ENCODE measurements at regions of chr20 and their contacts with region 1.

Region 1: DNA sequence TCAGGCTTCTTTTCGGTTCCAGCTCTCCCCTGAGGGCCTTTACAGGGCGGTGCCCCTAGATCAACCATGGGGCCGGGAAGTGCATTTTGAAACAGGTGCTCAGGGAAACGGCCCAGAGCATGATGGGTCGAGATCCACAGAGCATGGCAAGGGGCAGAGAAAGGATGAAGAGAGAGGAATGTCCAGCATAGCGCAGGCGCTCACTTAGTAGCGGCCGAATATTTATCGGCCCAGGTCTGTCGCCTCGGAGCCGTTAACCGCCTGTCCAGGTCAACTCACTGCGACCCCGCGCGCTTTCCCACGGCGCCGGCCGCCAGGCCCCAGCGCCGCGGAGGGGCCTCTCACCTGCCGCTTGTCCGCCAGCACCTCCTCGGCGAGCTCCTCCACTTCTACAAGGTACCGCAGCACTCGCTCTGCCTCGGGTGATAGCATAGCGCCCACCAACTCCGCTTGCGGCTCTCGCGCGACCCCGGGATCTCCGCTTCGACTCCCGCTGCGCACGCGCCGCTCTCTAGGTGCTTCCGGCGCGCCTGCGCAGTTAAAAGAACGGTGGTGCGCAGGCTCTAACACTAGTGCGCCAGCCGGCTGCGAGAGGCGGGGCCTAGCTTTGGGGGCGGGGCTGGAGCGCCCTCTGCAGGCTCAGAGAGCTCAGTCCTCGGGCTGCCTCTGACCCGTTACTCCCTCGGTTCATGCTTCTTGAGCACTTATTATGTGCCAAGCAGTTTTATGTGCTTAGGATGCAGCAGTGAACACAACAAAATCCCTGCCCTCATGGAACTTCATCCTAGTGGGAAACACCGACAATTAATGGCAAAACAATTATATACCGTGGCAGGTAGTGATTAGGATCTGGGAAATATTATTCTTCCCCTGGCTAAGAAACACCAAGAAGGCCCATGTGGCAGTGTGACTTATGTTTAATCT is at the start of gene PDRG1:
- DNase-seq: peak; percentile 99
- H3K4me3 ChIP-seq: peak within 1 kb of the TSS; percentile 79
- H3K27ac ChIP-seq: peak within 1 kb of the TSS; percentile 62
- H3K4me1 ChIP-seq: peaks cover 19% of the 10 kb centered on the region
- CTCF ChIP-seq: peak; percentile 95
- total RNA-seq, gene PDRG1: 9.7 and 11.2 TPM in 2 replicates

Region 2: DNA sequence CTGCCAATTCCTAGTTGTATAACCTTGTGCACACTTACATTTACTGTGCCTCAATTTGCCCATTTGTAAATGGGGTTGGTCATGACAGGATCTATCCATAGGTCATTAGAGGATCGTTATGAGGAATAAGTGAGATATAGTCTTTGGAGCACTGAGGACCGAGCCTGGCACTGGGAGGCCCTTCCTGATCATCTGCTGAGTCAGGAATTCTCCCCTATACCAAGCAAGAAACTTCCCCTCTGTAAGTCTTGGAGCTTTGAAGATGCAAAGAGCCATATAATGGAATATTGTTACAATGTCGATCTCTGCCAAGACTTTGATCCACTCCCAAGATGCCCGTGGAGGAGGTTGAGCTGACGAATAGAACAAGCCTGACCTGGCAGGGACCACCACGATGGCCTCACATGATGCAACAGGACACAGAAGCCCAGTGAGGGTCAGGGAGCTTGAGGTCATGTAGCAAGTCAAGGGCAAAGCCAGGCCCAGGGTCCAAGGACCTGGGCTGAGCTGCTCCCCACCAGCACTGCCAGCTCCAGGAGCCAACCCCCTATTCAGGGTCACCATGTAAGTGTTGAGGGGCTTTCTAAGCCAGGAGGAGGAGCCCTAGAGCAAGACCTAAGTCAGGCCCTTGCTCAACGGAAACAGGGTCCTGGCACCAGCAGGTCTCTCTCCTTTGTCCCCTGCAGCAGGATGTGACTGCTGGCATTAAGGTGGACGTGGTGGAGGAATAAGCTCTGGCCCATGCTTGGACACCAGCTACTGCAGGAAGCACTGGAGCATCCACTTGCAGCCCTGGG is 16.6 kb before region 1 on chr20:
- CTCF ChIA-PET with region 1: no interaction called
- POLR2A ChIA-PET with region 1: no interaction called
- intact Hi-C with region 1: no loop called
- DNase-seq: peak; percentile 48
- H3K4me3 ChIP-seq: no peak overlapping the region
- H3K27ac ChIP-seq: no peak overlapping the region
- H3K4me1 ChIP-seq: no peaks in the 10 kb centered on the region
- CTCF ChIP-seq: peak; percentile 62

Region 3: DNA sequence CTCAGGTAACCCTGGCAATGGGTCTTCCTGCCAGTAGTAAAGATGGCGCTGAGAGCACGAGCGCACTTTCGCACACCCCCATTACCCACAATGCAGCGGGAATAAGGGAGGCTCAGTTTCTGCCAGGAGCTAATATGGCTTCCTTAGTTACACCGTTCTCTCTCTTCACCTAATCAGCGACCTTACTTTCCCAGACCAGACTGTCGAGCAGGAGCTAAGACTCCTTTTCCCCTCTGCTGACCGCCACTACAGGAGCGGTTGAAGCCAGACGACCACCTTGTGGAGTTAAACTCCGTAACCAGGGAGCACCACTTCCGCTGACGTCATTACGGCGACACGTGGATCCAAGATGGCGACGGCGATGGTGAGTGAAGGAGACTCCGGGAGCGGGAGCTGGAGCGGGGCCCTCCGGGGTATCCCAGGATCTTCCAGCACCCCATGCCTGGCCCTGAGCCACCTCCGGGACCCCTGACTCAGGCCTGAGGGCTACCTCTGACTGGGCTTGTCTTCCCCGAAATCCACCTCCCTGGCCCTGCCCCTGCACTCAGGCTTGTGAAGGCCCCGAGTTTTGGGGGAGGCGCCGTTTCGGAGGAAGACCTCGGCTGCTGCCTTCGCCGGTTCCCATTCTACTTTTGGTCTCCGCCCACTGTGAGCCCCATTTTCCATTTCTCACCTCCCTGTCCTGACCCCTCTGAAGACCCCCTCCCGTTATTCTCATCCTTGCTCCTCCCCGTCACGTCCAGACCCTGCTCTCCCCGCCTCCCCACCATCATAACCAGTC is 157.8 kb after region 1 on chr20 and contains the start of gene TM9SF4:
- CTCF ChIA-PET with region 1: no interaction called
- POLR2A ChIA-PET with region 1: interaction called, 3 read pairs
- intact Hi-C with region 1: loop called (anchors 5 kb)
- DNase-seq: peak; percentile 98
- H3K4me3 ChIP-seq: peak within 1 kb of the TSS; percentile 82
- H3K27ac ChIP-seq: peak within 1 kb of the TSS; percentile 71
- H3K4me1 ChIP-seq: peaks cover 13% of the 10 kb centered on the region
- CTCF ChIP-seq: no peak
- total RNA-seq, gene TM9SF4: 16.6 and 20.8 TPM in 2 replicates

Measured in OCI-LY7 (cell line).